ENCODE measurements at regions of chr11 and their contacts with region 1.

Region 1: DNA sequence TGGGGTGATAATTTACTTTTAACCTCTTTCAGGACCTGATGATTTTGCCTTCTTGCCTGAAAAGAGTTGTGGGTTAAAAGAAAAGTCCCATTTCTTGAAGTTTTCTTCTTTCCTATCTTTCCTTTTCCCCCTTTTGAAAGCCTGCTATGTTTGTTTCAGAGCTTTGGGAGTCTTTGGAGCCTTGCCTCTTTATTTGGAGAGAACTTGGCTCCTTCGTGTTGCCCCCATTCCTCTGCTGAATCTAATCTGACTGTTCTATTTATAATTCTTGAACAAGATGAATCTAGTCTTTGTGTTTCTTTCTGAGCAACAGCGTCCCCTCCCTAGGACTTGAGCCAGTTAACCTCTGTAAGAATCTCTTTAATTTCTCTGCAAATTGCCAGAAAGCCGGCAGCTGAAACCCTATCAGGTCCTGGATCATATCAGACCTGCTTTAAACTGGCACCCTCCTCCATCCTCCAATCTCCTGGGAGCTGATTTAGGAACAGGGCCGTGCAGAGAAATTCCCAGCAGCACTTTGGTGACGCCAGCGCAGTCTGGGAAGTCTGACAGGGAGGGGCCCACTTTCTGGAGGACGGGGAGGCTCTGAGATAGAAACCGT is 289.1 kb upstream of the SORL1-AS1 start:
- DNase-seq: peak; percentile 85

Region 2: DNA sequence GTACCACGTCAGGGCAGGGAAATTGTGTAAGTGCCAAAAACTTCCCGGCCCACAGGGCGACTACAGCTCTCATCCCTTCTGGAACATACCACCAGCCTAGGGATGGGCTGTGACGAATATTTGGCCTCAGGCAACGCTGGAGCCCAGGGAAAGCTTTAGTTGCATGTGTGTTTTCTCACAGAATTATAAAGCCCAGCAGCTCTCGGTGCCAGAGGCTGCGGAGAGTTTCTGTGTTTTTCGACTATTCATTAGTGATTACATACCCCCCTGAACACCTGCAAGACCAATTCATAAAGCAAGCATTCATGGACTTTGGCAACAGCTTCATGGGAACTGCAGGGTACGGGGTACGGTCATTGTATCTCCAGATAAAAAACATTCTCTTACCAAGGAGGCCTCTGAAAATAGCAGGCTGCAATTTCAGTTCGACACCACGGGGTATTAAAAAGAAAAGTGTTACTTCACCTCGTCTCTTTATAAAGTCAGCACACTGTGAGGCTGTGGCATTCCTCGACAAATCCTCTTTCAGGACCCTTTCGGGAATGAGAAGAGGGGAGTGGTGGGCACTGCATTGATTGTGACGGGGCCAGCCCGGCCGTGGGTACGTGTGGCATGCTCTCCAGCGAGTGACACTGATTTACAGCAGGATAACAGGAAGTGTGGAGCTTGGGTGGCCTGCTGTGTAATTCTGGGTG is 45.5 kb before region 1 on chr11:
- intact Hi-C with region 1: loop called (anchors 2 kb)
- DNase-seq: no peak

Region 3: GRCh38 chr11:121722431-121723245 is 19.2 kb before region 1 on chr11:
- intact Hi-C with region 1: loop called (anchors 1 kb)
- DNase-seq: peak; percentile 91

Region 4: DNA sequence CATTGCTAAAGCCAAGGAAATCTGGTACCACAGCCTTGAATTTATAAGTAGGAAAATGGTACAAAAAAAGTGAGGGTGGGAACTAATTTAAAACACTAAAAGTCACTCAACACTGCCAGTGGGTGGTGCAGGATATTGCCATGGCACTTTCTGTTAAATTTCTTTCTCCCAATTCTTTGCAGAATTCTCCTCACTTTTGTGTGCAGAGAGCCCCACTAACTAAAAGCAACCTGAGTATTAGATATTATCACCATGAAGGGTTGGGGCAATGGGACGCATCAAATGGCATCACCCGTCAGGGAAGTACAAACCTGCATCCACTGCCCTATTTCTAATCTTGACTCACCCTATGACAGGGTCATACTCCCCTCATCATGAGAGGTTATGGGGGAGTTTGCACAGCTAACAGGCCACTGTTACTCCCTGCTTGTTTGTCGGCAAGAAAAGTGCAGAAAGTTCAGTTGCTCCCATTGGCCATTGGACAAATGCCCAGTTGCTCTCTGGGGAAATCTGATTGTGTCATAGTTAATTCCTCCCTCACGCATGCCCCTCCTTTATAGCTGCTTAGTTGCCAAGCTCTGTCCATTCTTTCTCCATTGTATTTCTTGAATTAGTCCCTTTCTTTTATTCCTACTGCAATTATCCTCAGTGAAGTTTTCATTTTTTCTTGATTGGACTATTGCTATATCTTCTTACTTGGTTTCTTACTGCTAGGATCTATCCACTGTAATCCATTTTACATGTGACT is 467.9 kb after region 1 on chr11:
- intact Hi-C with region 1: loop called (anchors 5 kb)
- DNase-seq: no peak